Endothelial cell of umbilical vein (primary cell): ENCODE measurements at regions of chr3 and their contacts with region 1.

Region 1: DNA sequence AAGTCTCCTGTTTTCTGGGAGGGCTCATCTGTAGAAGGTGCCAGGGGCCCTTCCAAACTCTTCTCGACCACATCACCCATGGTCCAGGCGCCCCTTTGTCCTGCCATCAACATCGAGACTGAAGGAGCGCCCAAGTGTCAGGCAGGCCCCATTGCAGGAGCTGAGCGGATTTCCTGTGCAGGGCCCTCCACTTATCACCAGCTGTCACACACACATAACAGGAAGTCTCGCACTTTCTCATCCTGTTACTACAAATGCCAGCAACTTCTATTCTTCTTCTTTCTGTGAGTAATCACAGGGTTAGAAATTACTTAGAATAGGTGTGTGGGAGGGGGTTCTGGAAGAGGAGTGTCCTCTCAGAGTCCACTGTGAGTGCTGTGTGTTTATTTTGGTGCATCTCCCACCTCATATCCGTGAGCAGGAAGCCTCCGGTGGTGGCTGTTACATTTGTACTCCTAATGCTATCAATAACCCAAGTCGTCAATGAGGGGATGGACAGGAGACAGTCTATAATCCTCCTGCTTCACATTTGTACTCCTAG is at the start of gene KLHL6:
- DNase-seq: peak; percentile 94
- H3K4me3 ChIP-seq: peak within 1 kb of the TSS; percentile 19 to 75 (median 30)
- H3K27ac ChIP-seq: peak within 1 kb of the TSS; percentile 92
- H3K4me1 ChIP-seq: peaks cover 47% of the 10 kb centered on the region
- H3K27me3 ChIP-seq: no peaks in the 10 kb centered on the region
- CTCF ChIP-seq: no peak
- POLR2A ChIP-seq: peak; percentile 52
- total RNA-seq, gene KLHL6: 12.6 and 14.8 TPM in 2 replicates

Region 2: GRCh38 chr3:183481582-183481981 is 74.0 kb before region 1 on chr3:
- CTCF ChIA-PET with region 1: interaction called, 6 read pairs
- POLR2A ChIA-PET with region 1: no interaction called
- dilution Hi-C with region 1: no loop called
- intact Hi-C with region 1: loop called (anchors 10 kb)
- DNase-seq: no peak
- H3K4me3 ChIP-seq: no peak overlapping the region
- H3K27ac ChIP-seq: no peak overlapping the region
- H3K4me1 ChIP-seq: no peaks in the 10 kb centered on the region
- H3K27me3 ChIP-seq: no peaks in the 10 kb centered on the region
- CTCF ChIP-seq: no peak
- POLR2A ChIP-seq: no peak

Region 3: GRCh38 chr3:183490670-183491069 is 64.9 kb before region 1 on chr3:
- CTCF ChIA-PET with region 1: no interaction called
- POLR2A ChIA-PET with region 1: no interaction called
- dilution Hi-C with region 1: no loop called
- intact Hi-C with region 1: loop called (anchors 1 kb)
- DNase-seq: peak; percentile 28
- H3K4me3 ChIP-seq: no peak overlapping the region
- H3K27ac ChIP-seq: no peak overlapping the region
- H3K4me1 ChIP-seq: peaks cover 6% of the 10 kb centered on the region
- H3K27me3 ChIP-seq: no peaks in the 10 kb centered on the region
- CTCF ChIP-seq: no peak
- POLR2A ChIP-seq: no peak

Region 4: DNA sequence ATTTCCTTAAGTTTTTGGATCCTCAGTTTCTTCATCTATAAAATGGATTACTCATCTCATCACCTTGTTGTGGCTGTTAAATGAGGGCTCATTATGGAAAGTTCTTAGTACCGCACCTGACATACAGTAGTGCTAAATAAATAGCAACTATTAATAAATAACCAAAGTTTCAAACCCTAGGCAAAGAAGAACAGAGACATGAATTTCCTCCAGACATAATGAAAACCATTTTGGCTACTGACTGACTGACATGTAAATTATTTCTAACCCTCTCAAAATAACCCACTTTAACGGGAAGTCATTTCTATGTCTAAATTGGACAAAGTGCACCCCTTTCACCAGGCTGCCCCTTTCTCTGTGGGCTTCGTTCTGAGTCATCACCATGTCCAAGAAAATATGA is 17.3 kb after region 1 on chr3:
- CTCF ChIA-PET with region 1: no interaction called
- POLR2A ChIA-PET with region 1: no interaction called
- dilution Hi-C with region 1: no loop called
- intact Hi-C with region 1: no loop called
- DNase-seq: no peak
- H3K4me3 ChIP-seq: no peak overlapping the region
- H3K27ac ChIP-seq: no peak overlapping the region
- H3K4me1 ChIP-seq: peaks cover 4% of the 10 kb centered on the region
- H3K27me3 ChIP-seq: peaks cover 13 to 21% of the 10 kb centered on the region in 2 experiments
- CTCF ChIP-seq: no peak
- POLR2A ChIP-seq: no peak

Region 5: DNA sequence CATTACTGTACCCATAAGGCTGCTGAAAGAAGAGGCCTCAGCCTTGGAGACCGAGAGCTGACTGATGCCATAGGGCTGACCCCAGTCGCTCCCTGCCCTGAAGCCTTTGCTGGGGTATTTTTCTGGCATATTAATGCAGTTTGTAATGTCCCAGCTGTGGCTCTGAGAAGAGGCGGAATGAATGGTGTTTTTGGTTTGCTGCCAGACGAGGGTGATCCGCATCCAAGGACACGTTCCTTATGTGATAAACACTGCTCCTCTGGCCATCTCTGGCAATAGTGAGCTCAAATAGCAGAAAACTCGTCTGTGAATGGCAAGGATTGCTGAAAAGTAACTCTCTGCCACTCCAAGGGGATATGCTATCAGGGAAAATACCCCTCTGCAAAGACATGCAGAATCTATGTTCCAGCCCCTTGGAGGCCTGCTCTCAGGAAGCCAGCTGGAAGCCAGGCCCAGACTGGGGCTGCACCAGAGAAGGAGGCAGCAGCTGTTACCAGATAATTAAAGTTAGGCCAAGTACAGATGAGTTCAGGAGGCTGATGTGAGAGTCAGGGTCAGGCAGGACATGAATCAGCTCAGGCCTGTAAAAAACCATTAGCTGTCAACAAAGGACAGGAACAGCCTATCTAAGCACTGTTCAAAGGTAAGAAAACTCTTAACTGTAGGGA is 28.8 kb after region 1 on chr3:
- CTCF ChIA-PET with region 1: interaction called, 7 read pairs
- POLR2A ChIA-PET with region 1: no interaction called
- dilution Hi-C with region 1: no loop called
- intact Hi-C with region 1: loop called (anchors 1 kb)
- DNase-seq: peak; percentile 71
- H3K4me3 ChIP-seq: no peak overlapping the region
- H3K27ac ChIP-seq: peak overlapping the region; percentile 2
- H3K4me1 ChIP-seq: peaks cover 29% of the 10 kb centered on the region
- H3K27me3 ChIP-seq: peaks cover 0 to 2% of the 10 kb centered on the region in 2 experiments
- CTCF ChIP-seq: no peak
- POLR2A ChIP-seq: no peak

Region 6: DNA sequence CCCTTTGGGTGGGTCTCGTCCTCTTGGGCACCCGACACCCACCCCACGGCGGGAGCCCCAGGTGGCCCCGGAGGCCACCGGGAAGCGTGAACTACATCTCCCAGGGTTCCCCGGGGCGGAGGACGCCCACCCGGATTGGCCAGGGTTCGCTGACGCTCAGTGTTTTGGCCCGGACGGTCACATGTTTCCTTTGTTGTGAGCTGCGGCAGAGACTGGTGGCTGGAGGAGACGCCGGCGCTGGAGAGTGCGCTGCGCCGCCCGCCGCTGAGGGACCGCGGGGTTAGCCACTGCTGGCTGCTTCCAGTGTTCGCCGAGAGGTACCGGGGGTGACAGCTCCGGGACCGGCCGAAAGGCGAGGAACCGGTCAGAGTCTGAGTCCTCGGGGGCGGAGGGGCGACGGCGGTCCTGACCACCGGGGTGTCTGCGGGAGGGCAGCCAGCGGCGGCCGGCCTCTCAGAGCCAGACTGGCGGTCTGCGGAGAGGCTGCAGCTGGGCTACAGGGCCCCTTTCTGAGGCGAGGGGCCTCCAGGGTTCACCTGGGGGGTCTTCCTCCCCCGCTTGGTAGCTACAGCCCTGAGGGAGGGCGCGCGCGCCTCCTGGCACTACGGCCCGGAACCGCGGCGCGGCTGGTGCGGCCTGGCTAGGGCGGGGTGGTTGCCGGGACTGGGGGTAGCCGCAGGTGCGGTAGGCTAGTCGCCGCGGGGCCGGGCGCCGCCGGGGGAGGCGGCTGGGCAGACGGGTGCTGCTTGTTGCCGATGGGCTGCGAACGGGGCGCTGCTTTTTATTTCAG is 80.0 kb after region 1 on chr3 and contains the start of gene KLHL24:
- CTCF ChIA-PET with region 1: no interaction called
- POLR2A ChIA-PET with region 1: no interaction called
- dilution Hi-C with region 1: no loop called
- intact Hi-C with region 1: loop called (anchors 1 kb)
- DNase-seq: peak; percentile 93
- H3K4me3 ChIP-seq: peak within 1 kb of the TSS; percentile 81 to 99 (median 84)
- H3K27ac ChIP-seq: peak within 1 kb of the TSS; percentile 89
- H3K4me1 ChIP-seq: peaks cover 19% of the 10 kb centered on the region
- H3K27me3 ChIP-seq: no peaks in the 10 kb centered on the region
- CTCF ChIP-seq: no peak
- POLR2A ChIP-seq: peak; percentile 41
- total RNA-seq, gene KLHL24: 45.8 and 46.2 TPM in 2 replicates

Region 7: DNA sequence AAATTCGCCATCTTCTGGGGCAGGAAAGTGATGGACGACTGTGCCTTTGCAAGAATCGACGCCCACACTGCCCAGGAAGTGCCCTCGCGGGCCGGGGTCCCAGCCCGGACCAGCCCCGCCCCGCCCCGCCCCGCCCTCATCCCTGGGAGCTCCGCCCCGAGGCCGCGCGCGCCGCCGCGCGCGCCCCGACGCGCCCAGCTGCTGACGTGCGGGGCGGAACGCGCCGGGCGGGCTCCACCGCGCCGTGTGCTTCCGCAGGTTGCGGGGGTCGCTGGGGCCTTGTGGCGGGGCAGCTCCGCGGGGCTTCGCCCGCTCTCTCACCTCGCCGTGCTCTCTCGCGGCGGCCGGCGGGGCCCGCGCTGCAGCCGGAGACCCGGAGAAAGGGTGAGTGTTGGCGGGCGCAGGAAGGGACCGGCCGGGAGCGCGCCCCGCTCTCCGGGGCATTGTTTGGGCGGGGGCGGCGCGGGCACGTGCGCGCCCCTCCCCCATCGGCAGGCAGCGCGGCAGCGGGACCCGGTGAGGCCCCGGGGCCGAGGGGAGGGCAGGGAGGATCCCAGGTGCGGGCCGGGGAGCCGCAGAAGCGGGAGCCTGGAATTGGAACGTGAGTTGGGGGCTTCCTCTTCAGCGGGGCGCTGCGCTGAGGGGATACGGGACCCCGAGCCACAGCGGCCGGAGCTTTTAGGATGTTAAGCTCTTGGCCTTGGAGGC is 142.2 kb after region 1 on chr3 and contains the start of gene YEATS2:
- CTCF ChIA-PET with region 1: no interaction called
- POLR2A ChIA-PET with region 1: no interaction called
- dilution Hi-C with region 1: no loop called
- intact Hi-C with region 1: loop called (anchors 1 kb)
- DNase-seq: peak; percentile 66
- H3K4me3 ChIP-seq: peak within 1 kb of the TSS; percentile 59 to 98 (median 86)
- H3K27ac ChIP-seq: peak within 1 kb of the TSS; percentile 73
- H3K4me1 ChIP-seq: peaks cover 15% of the 10 kb centered on the region
- H3K27me3 ChIP-seq: no peaks in the 10 kb centered on the region
- CTCF ChIP-seq: no peak
- POLR2A ChIP-seq: peak; percentile 81
- total RNA-seq, gene YEATS2: 59.1 and 59.9 TPM in 2 replicates

Region 8: GRCh38 chr3:183734750-183735494 is 179.3 kb after region 1 on chr3:
- CTCF ChIA-PET with region 1: no interaction called
- POLR2A ChIA-PET with region 1: no interaction called
- dilution Hi-C with region 1: no loop called
- intact Hi-C with region 1: loop called (anchors 2 kb)
- DNase-seq: peak; percentile 90
- H3K4me3 ChIP-seq: peak overlapping the region in 1 of 3 experiments; percentile 21
- H3K27ac ChIP-seq: peak overlapping the region; percentile 74
- H3K4me1 ChIP-seq: peaks cover 28% of the 10 kb centered on the region
- H3K27me3 ChIP-seq: no peaks in the 10 kb centered on the region
- CTCF ChIP-seq: no peak
- POLR2A ChIP-seq: no peak